Panc1 (cell line): ENCODE measurements at regions of chr1 and their contacts with region 1.

Region 1: GRCh38 chr1:78145105-78145580 is 99.4 kb downstream of the GIPC2 start:
- DNase-seq: peak; percentile 43
- ATAC-seq: peak; percentile 90
- H3K4me3 ChIP-seq: no peak overlapping the region
- H3K27ac ChIP-seq: no peak overlapping the region
- H3K4me1 ChIP-seq: no peaks in the 10 kb centered on the region
- H3K27me3 ChIP-seq: peaks cover 6% of the 10 kb centered on the region
- CTCF ChIP-seq: peak; percentile 91

Region 2: GRCh38 chr1:78132174-78132947 is 12.8 kb before region 1 on chr1:
- CTCF ChIA-PET with region 1: no interaction called
- POLR2A ChIA-PET with region 1: no interaction called
- in situ Hi-C with region 1: no loop called
- intact Hi-C with region 1: no loop called
- DNase-seq: no peak
- ATAC-seq: no peak
- H3K4me3 ChIP-seq: no peak overlapping the region
- H3K27ac ChIP-seq: no peak overlapping the region
- H3K4me1 ChIP-seq: no peaks in the 10 kb centered on the region
- H3K27me3 ChIP-seq: no peaks in the 10 kb centered on the region; the same call in none of the 2 replicates
- CTCF ChIP-seq: no peak

Region 3: DNA sequence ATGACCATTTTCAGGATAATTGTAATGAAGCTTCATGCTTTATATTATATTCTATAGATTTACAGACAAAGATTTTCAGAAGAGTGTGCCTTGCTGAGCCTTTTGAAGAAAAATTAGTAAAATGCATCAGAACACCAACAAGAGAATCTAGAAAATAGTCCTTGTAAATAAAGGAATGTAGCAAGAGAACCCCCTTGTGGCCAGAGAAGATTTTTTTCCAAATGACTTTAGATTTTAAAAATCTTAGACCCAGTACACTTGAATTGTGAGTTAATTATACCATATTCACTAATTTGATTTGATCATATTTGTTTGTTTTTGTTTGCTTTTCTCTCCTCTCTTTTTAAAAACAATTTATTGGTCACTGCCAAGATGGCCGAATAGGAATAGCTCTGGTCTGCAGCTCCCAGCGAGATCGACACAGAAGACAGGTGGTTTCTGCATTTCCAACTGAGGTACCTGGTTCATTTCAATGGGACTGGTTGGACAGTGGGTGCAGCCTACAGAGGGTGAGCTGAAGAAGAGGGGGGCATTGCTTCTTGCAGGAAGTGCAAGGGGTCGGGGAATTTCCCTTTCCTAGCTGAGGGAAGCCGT is 462.3 kb after region 1 on chr1:
- CTCF ChIA-PET with region 1: interaction called, 3 read pairs
- POLR2A ChIA-PET with region 1: no interaction called
- in situ Hi-C with region 1: no loop called
- intact Hi-C with region 1: loop called (anchors 1 kb)
- DNase-seq: no peak
- ATAC-seq: no peak
- H3K4me3 ChIP-seq: no peak overlapping the region
- H3K27ac ChIP-seq: no peak overlapping the region
- H3K4me1 ChIP-seq: no peaks in the 10 kb centered on the region
- H3K27me3 ChIP-seq: no peaks in the 10 kb centered on the region
- CTCF ChIP-seq: peak; percentile 64; the same call in 1 of the 2 replicates